Posterior cingulate gyrus (tissue), 11 donors: ENCODE measurements at regions of chr11 and their contacts with region 1.

Region 1: GRCh38 chr11:17276236-17277023 is at the start of gene NUCB2:
- DNase-seq: peak; percentile 95 to 100 (median 99)

Region 2: DNA sequence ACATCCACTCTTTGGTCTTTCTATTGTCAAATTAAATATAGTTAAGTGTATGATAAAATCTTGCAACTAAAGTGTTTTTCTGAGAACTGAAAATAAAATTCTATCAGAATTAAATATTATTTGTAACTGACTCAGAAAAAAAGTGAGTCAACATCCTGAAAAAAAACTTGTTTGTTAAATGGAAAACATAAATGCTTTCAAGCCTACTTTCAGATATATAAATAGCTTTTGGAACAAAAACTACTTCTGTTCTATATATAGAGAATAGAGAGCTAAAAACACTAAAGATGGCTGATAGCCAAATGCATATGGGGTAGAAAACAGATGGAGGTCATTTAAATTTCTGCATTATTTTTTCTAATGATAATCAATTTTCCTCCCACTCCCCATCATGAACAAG is 130.5 kb before region 1 on chr11:
- intact Hi-C with region 1: no loop called
- DNase-seq: no peak

Region 3: GRCh38 chr11:17171916-17172315 is 104.5 kb before region 1 on chr11:
- intact Hi-C with region 1: no loop called
- DNase-seq: no peak

Region 4: GRCh38 chr11:17219016-17219415 is 57.4 kb before region 1 on chr11:
- intact Hi-C with region 1: loop called (anchors 10 kb)
- DNase-seq: no peak

Region 5: DNA sequence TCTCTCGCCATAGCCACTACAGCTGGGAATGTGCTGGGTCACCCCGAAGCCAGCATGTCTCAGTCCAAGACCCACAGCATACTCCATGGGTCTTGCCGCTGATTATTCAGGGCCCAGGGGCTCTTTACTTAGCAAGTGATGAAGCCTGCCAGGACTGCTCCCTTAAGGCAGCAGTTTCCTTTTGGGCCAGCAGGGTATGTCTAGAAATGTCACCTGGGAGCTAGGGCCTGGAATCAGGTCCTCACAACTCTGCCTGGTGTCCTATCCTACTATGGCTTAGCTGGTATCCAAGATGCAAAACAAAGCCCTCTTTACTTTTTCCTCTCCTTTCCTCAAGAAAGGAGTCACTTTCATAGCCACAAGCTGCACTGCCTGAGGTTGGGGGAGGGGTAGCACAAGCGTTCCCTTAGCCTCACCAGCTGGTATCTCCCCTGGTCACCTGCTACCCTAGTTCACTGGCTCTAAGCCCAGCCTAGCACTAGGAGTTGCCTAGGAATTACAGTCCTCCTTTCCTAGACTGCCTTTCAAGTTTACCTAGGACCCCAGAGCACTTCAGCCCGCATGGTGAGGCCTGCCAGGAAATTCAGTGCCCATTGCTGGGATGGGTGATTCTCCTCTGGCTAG is 52.6 kb after region 1 on chr11:
- intact Hi-C with region 1: no loop called
- DNase-seq: no peak

Region 6: GRCh38 chr11:17354601-17354991 is 78.2 kb after region 1 on chr11:
- intact Hi-C with region 1: loop called (anchors 5 kb)
- DNase-seq: peak in 5 of 10 donors; percentile 15 to 58 (median 38)